ENCODE measurements at regions of chr10 and their contacts with region 1.

Region 1: GRCh38 chr10:51422311-51423120 is 276.9 kb downstream of the CSTF2T start:
- DNase-seq: peak; percentile 63
- H3K4me3 ChIP-seq: no peak overlapping the region
- H3K27ac ChIP-seq: peak overlapping the region; percentile 7 to 40 (median 20)
- H3K4me1 ChIP-seq: peaks cover 0 to 14% (median 9%) of the 10 kb centered on the region in 4 donors
- H3K27me3 ChIP-seq: no peaks in the 10 kb centered on the region
- CTCF ChIP-seq: peak; percentile 68 to 77 (median 74)
- EP300 ChIP-seq: no peak
- POLR2A ChIP-seq: no peak

Region 2: DNA sequence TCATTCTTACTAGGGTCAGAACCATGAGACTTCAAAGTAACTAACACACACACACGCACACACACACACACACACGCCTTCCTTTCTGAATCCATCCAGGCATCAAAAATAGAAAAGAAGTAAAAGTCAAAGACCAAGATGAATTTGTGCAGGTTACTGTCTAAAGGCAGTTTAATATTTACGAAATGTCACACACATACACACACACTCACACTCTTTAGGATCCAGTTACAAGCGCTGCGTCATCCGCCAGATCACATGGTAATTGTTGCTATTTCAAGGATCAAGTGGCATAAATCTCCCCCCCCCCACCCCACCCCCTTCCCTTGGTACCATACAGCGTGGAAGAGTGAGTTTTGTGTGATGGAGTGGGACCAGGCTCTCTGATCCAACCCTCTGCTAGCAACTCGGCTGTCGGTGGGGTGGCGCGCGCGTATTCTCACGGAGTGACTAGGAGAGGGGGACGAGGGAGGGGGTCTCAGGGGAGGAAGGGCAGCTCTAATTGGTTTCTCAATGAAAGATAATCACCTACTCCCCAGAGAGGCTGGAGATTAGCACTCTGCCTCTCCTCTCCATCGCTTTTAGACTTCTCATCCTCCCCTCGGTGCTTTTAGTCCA is 431.8 kb before region 1 on chr10:
- in situ Hi-C with region 1: loop called in 1 of 4 experiments (anchors 10 kb)
- intact Hi-C with region 1: no loop called
- DNase-seq: peak; percentile 61
- H3K4me3 ChIP-seq: peak overlapping the region; percentile 18 to 89 (median 66)
- H3K27ac ChIP-seq: peak overlapping the region; percentile 83 to 89 (median 88)
- H3K4me1 ChIP-seq: peaks cover 0 to 46% (median 36%) of the 10 kb centered on the region in 4 donors
- H3K27me3 ChIP-seq: no peaks in the 10 kb centered on the region
- CTCF ChIP-seq: no peak
- EP300 ChIP-seq: no peak
- POLR2A ChIP-seq: no peak

Region 3: DNA sequence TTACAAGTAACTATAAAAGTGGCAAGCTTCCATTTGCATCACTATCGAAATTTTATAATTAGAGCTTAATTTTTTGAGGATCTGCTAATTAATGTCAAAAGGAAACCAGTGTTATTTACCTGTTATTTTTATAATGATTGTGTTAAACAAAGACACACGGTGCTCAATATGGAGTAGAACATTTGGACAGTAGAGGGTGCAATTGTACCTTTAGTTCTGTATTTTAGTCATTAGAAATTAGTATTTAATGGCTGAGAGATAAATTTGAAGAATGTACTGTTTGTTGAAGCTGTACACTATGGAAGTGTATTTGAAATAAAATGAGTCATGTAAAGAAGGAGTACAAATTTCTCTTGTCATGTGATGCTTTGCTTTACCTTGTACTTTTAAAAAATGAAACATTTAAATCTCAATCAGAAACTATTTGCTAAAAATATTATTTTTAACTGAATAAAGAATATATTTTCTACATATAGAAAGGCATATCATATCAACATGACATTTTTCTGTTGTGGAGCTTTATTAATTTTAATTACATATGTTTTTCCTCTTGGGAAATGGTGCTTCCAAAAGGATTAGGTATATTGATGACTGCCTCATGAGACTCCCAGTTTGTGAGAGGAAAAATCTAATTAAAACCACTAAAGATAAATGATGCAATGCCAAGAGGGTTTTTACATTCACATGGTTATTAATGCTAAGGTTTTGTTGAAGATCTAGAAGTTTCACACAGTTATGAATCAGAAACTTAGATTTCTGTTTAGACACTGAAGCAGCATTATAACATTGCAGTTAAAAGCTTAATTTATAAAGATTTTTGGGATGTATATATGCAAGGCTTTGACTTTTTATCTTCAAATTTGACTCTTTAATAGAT is 358.6 kb before region 1 on chr10:
- in situ Hi-C with region 1: loop called in 3 of 4 experiments (anchors 10 kb)
- intact Hi-C with region 1: no loop called
- DNase-seq: no peak
- H3K4me3 ChIP-seq: no peak overlapping the region
- H3K27ac ChIP-seq: no peak overlapping the region
- H3K4me1 ChIP-seq: no peaks in the 10 kb centered on the region
- H3K27me3 ChIP-seq: no peaks in the 10 kb centered on the region
- CTCF ChIP-seq: peak; percentile 45 to 60 (median 55)
- EP300 ChIP-seq: no peak
- POLR2A ChIP-seq: no peak

Region 4: DNA sequence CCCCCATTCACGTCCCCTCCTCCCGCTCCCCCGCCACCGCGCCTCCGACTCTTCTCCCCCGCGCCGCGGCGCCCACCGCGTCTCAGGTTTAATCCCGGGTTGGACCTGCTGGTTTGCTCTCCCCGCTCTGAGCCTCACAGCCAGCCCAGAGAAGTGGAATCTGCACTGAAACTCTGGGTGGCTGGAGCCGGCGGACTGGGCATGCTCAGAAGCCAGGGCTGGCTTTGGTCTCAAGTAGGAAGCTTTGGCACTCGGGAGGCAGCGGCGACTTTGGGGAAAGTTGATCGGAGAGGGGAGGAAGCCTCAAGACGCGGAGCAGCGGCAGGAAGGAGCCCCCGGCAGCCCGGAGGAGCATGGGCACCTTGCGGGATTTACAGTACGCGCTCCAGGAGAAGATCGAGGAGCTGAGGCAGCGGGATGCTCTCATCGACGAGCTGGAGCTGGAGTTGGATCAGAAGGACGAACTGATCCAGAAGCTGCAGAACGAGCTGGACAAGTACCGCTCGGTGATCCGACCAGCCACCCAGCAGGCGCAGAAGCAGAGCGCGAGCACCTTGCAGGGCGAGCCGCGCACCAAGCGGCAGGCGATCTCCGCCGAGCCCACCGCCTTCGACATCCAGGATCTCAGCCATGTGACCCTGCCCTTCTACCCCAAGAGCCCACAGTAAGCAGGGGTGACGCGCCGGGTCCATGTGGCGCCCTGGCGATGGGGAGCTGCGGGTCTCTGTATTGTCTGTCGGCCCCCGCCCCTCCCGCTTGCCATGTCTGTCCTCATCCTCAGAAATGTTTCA is 348.1 kb before region 1 on chr10 and contains the start of gene PRKG1:
- in situ Hi-C with region 1: loop called in 3 of 4 experiments (anchors 10 kb)
- intact Hi-C with region 1: loop called (anchors 5 kb)
- DNase-seq: peak; percentile 71
- H3K4me3 ChIP-seq: peak within 1 kb of the TSS; percentile 43 to 64 (median 53)
- H3K27ac ChIP-seq: peak within 1 kb of the TSS; percentile 83 to 89 (median 88)
- H3K4me1 ChIP-seq: peaks cover 0 to 10% (median 4%) of the 10 kb centered on the region in 4 donors
- H3K27me3 ChIP-seq: peaks cover 9% of the 10 kb centered on the region
- CTCF ChIP-seq: no peak
- EP300 ChIP-seq: no peak
- POLR2A ChIP-seq: peak; percentile 37
- total RNA-seq, gene PRKG1: 17.6 to 30.6 (median 26.9) TPM

Region 5: DNA sequence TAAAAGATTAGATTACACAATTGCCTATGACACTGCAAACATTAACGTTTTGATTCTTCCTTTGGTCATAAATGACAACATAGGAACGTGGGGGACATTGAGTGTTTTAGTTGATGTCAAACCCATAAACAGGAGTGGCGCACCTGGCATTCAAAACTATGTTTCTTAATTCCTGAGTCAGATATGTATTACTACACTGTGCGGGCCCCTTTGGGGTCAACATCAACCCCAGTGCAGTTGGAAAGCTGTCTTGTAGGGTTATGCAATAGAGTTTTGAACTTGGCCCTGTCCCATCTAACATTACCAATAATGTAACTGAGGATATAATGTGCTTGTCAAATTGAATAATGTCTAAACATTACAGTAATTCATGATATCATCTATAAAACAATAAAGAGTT is 120.3 kb after region 1 on chr10:
- in situ Hi-C with region 1: no loop called
- intact Hi-C with region 1: no loop called
- DNase-seq: no peak
- H3K4me3 ChIP-seq: no peak overlapping the region
- H3K27ac ChIP-seq: no peak overlapping the region
- H3K4me1 ChIP-seq: no peaks in the 10 kb centered on the region
- H3K27me3 ChIP-seq: no peaks in the 10 kb centered on the region
- CTCF ChIP-seq: no peak
- EP300 ChIP-seq: no peak
- POLR2A ChIP-seq: no peak

Region 6: DNA sequence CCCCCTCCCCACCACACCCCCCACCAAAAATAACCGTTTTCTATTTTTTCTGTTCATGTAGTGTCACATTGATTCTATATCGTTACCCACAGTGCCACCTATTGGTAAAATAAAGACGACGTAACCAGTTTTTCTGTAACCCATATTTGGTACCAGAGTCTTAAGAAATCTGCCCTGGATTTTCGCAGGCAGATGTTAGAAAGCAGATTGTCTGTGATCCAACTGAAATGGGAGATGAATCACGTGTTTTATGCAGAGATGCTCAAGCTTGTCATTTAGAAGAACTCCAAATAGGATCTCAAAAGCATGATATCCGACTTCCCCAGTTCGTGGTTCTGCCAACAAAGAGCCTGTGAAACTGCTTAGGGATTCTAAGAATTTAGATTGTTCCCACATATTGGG is 538.0 kb after region 1 on chr10:
- in situ Hi-C with region 1: loop called in 1 of 4 experiments (anchors 25 kb)
- intact Hi-C with region 1: no loop called
- DNase-seq: no peak
- H3K4me3 ChIP-seq: no peak overlapping the region
- H3K27ac ChIP-seq: no peak overlapping the region
- H3K4me1 ChIP-seq: peaks cover 0 to 14% (median 0%) of the 10 kb centered on the region in 4 donors
- H3K27me3 ChIP-seq: no peaks in the 10 kb centered on the region
- CTCF ChIP-seq: peak; percentile 47 to 60 (median 57)
- EP300 ChIP-seq: no peak
- POLR2A ChIP-seq: no peak

Region 7: GRCh38 chr10:52215745-52216361 is 793.3 kb after region 1 on chr10:
- in situ Hi-C with region 1: loop called in 1 of 4 experiments (anchors 25 kb)
- intact Hi-C with region 1: no loop called
- DNase-seq: peak; percentile 48
- H3K4me3 ChIP-seq: no peak overlapping the region
- H3K27ac ChIP-seq: peak overlapping the region in 1 of 4 donors; percentile 38
- H3K4me1 ChIP-seq: peaks cover 0 to 32% (median 14%) of the 10 kb centered on the region in 4 donors
- H3K27me3 ChIP-seq: no peaks in the 10 kb centered on the region
- CTCF ChIP-seq: peak; percentile 69 to 80 (median 80)
- EP300 ChIP-seq: no peak
- POLR2A ChIP-seq: no peak